Activated T-helper 1 cell treated with anti-CD3 and anti-CD28 coated beads, Interleukin-12 subunit alpha, Interleukin-12 subunit beta, Interleukin-2, Interleukin-4 antibody, amounts not matched to agents 30 ng/mL and 10 ng/mL and 1 ng/mL, durations not matched to agents 14 hours and 24 hours and 36 hours (primary cell): ENCODE measurements at regions of chr18 and their contacts with region 1.

Region 1: GRCh38 chr18:35661483-35662146 is 80.1 kb downstream of the GALNT1 start:
- DNase-seq: no peak
- H3K4me3 Mint-ChIP-seq: no peak overlapping the region
- H3K27ac Mint-ChIP-seq: no peak overlapping the region
- H3K4me1 Mint-ChIP-seq: no peaks in the 10 kb centered on the region
- H3K27me3 Mint-ChIP-seq: no peaks in the 10 kb centered on the region

Region 2: GRCh38 chr18:35386600-35387351 is 274.8 kb before region 1 on chr18:
- intact Hi-C with region 1: loop called (anchors 5 kb)
- DNase-seq: peak; percentile 56
- H3K4me3 Mint-ChIP-seq: no peak overlapping the region
- H3K27ac Mint-ChIP-seq: no peak overlapping the region
- H3K4me1 Mint-ChIP-seq: peaks cover 9% of the 10 kb centered on the region
- H3K27me3 Mint-ChIP-seq: peaks cover 21% of the 10 kb centered on the region